ENCODE measurements at regions of chr9 and their contacts with region 1.

Region 1: GRCh38 chr9:131739980-131740648 is at the start of gene RAPGEF1:
- DNase-seq: no peak
- H3K4me3 ChIP-seq: peak within 1 kb of the TSS; percentile 78
- H3K27ac ChIP-seq: peak within 1 kb of the TSS; percentile 21
- H3K27me3 ChIP-seq: peaks cover 4% of the 10 kb centered on the region
- CTCF ChIP-seq: peak; percentile 56
- polyA plus RNA-seq, gene RAPGEF1: 27.6 and 32.4 TPM in 2 replicates

Region 2: GRCh38 chr9:131590908-131591844 is 148.9 kb before region 1 on chr9:
- CTCF ChIA-PET with region 1: interaction called, 56 read pairs
- POLR2A ChIA-PET with region 1: no interaction called
- DNase-seq: peak; percentile 59
- H3K4me3 ChIP-seq: no peak overlapping the region
- H3K27ac ChIP-seq: no peak overlapping the region
- H3K27me3 ChIP-seq: no peaks in the 10 kb centered on the region
- CTCF ChIP-seq: peak; percentile 92

Region 3: DNA sequence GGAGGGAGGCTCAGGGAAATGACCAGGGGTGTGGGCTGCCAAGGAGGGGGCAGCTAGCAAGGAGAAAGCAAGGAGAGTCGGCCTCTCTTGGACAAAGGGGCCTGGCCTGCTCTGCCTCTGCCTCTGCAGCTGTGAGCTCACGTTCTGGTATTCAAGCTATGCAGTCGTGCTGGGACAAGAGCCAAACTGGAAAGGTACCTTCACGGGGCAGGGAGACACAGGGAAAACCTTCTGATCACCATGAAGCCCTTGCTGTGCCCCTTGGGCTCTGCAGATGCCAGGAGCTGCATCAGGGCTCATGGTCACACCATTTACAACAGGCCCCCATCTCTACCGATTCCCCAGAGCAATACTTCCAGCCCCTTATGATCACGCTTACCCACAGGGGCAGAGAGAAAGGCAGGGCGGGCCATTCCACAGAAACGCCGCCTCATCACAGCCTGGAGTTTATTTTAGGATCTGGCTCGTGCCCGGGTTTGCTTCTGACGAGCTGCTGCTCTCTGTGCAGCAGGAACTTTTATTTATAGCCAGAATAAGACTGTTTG is 131.5 kb before region 1 on chr9:
- CTCF ChIA-PET with region 1: interaction called, 10 read pairs
- POLR2A ChIA-PET with region 1: no interaction called
- DNase-seq: peak; percentile 68
- H3K4me3 ChIP-seq: peak overlapping the region; percentile 41
- H3K27ac ChIP-seq: peak overlapping the region; percentile 97
- H3K27me3 ChIP-seq: no peaks in the 10 kb centered on the region
- CTCF ChIP-seq: no peak

Region 4: DNA sequence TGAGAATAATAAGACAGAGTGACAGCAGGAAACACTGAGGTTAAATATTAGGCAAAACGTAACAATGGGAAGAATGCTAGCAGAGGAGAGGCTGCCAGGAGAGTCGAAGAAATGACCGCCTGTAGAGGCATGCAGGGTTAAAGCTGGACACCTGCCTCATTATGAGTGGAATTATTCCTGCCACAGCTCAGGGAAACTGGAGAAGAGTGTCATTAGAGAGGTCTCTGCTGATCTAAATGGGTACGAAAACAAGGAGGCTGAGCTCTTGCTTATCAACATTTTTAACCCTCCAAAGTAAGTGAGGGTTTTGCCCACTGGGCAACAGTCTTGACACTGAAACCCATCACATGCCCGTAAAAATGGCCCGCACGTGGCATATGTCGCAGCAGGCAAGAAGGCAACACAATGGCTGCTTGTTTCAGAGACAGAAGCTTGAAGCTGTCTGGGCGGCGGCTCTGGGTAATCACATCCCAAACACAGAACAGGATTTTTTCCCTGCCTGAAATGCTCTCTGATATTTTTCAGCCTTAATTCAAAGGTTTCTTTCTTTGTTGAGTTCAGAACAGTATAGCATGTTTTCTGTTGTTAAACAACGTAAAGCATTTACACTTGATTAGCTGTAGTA is 220.9 kb after region 1 on chr9:
- CTCF ChIA-PET with region 1: no interaction called
- POLR2A ChIA-PET with region 1: no interaction called
- DNase-seq: no peak
- H3K4me3 ChIP-seq: no peak overlapping the region
- H3K27ac ChIP-seq: no peak overlapping the region
- H3K27me3 ChIP-seq: no peaks in the 10 kb centered on the region
- CTCF ChIP-seq: no peak